Caki2 (cell line): ENCODE measurements at regions of chr7 and their contacts with region 1.

Region 1: GRCh38 chr7:4744391-4745264 is 30.8 kb upstream of the AP5Z1 start:
- DNase-seq: peak; percentile 100

Region 2: GRCh38 chr7:4689668-4690067 is 55.0 kb before region 1 on chr7:
- in situ Hi-C with region 1: loop called (anchors 5 kb)
- DNase-seq: peak; percentile 70